ENCODE measurements at regions of chr19 and their contacts with region 1.

Region 1: DNA sequence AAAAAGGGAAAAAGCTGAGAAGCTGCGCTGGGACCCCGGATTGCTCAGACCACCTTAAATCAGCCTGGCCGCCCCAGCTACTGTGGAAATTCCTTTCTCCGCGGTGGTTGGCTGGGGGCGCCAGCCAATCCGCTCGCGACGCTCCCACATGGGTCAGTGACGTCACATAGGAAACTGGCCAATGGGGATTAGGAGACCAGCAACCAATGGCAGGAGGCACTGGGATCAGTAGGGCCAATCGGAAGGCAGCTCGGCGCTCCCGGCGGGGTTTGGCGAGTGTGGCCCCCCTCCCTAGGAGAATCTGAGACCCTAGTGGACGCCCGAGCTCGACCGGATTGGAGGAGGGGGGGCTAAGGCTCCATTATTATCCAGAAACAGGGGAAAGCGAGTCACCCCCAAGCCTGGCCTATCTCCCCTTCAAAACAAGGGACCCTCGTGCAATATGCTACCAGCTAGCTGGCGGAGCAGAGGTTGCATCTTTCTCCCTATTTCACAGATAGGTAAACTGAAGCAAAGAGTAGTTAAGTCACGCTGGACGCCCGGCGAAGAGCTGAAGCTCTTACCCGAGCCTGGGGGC is 6.5 kb upstream of the TLE2 start:
- H3K4me3 ChIP-seq: peak overlapping the region; percentile 42
- H3K27ac ChIP-seq: peak overlapping the region; percentile 96
- H3K4me1 ChIP-seq: peaks cover 8% of the 10 kb centered on the region; the same call in 1 of the 2 replicates
- CTCF ChIP-seq: 0 out of 2 replicates have a peak, but pooled peaks have one; percentile 18

Region 2: DNA sequence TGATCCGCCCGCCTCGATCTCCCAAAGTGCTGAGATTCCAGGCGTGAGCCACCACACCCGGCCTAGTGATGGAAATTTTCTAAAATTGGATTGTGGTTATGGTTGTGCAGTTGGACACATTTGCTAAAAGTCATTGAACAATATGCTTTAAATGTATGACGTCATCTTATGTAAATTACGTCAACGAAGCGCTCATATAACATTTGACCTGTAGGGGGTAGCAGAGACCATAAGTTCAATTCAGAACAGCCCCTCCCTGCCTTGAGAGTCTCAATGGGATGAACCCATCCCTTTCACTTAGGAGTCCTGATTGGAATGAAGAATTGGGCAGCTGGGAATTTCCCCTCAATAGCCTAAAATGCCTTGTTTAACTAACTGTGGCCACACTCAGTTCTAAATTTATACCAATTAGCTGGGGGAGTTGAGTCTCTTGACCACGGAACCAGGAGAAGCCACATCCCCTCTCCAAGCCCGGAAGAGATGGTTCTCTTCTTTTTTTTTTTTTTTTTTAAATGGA is 73.5 kb before region 1 on chr19:
- CTCF ChIA-PET with region 1: interaction called, 10 read pairs
- POLR2A ChIA-PET with region 1: interaction called, 7 read pairs
- H3K4me3 ChIP-seq: no peak overlapping the region
- H3K27ac ChIP-seq: no peak overlapping the region
- H3K4me1 ChIP-seq: no peaks in the 10 kb centered on the region
- CTCF ChIP-seq: peak; percentile 75

Region 3: DNA sequence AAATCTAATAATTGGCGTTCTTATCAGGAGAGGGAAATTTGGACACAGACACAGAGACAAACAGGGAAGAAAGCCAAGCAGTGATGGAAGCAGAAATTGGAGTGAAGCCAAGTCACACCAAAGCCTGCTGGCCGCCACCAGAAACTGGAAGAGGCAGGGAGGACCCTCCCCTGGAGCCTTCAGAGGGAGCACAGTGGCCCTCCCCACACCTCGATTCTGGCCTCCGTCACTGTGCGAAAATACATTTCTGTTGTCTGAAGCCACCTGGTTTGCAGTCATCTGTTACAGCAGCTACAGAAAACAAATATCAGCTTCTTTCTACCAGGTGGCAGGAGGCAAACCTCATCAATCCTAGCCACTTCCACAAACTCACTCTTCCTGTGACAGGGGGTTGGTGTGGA is 66.5 kb before region 1 on chr19:
- CTCF ChIA-PET with region 1: interaction called, 12 read pairs
- POLR2A ChIA-PET with region 1: interaction called, 7 read pairs
- H3K4me3 ChIP-seq: no peak overlapping the region
- H3K27ac ChIP-seq: peak overlapping the region; percentile 28
- H3K4me1 ChIP-seq: peaks cover 9% of the 10 kb centered on the region
- CTCF ChIP-seq: no peak

Region 4: GRCh38 chr19:2977001-2977685 is 58.5 kb before region 1 on chr19 and contains the start of gene TLE6:
- CTCF ChIA-PET with region 1: interaction called, 4 read pairs
- POLR2A ChIA-PET with region 1: interaction called, 15 read pairs
- H3K4me3 ChIP-seq: peak within 1 kb of the TSS; percentile 44
- H3K27ac ChIP-seq: peak within 1 kb of the TSS; percentile 1; the same call in 1 of the 2 replicates
- H3K4me1 ChIP-seq: no peaks in the 10 kb centered on the region; the same call in 1 of the 2 replicates
- CTCF ChIP-seq: peak; percentile 17; the same call in 1 of the 2 replicates

Region 5: GRCh38 chr19:3047425-3048189 is 12.0 kb after region 1 on chr19:
- CTCF ChIA-PET with region 1: interaction called, 3 read pairs
- POLR2A ChIA-PET with region 1: interaction called, 37 read pairs
- H3K4me3 ChIP-seq: peak overlapping the region; percentile 15
- H3K27ac ChIP-seq: peak overlapping the region; percentile 69
- H3K4me1 ChIP-seq: peaks cover 13% of the 10 kb centered on the region
- CTCF ChIP-seq: no peak

Region 6: GRCh38 chr19:3057306-3057714 is 21.7 kb after region 1 on chr19:
- CTCF ChIA-PET with region 1: interaction called, 3 read pairs
- POLR2A ChIA-PET with region 1: interaction called, 36 read pairs
- H3K4me3 ChIP-seq: no peak overlapping the region
- H3K27ac ChIP-seq: peak overlapping the region; percentile 76; the same call in 1 of the 2 replicates
- H3K4me1 ChIP-seq: peaks cover 20% of the 10 kb centered on the region
- CTCF ChIP-seq: no peak